ENCODE measurements at regions of chrX and their contacts with region 1.

Region 1: DNA sequence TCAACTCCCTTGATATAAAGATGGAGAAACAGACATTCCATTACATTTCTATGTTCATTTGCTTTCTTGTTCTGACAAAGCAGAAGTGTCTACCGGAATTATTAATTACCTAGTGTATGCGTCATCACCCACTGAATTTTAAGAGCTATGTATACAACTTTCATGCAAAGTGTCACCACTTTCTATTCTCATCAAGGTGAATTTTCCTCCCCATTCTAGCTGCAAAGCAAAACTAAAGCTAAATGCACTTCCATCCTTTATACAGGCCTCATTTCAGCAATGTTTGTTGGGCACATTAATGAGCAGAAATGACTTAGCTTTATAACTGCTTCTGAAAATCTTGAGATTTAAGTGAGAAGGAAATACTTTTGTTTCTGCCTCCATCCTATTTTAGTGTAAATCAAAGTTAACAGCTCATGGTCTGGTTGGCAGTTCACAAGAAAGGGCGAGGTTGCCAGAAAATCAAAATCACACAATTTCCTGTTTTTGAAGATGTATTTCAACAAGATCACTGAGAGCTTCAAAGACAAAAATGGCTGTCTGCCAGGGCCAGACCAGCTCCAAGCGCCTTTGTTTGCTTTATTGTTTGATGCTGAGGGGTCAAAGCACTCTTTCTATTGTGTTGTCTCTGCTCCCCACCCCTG is 7.2 kb upstream of the FAM9C start:
- DNase-seq: peak; percentile 71
- ATAC-seq: peak; percentile 71
- H3K4me3 ChIP-seq: no peak overlapping the region
- H3K27ac ChIP-seq: peak overlapping the region; percentile 69
- H3K4me1 ChIP-seq: peaks cover 48% of the 10 kb centered on the region
- H3K27me3 ChIP-seq: no peaks in the 10 kb centered on the region
- CTCF ChIP-seq: no peak
- EP300 ChIP-seq: peak; percentile 85 to 95; a peak in 3 of 4 replicates
- POLR2A ChIP-seq: no peak
- RAD21 ChIP-seq: no peak

Region 2: DNA sequence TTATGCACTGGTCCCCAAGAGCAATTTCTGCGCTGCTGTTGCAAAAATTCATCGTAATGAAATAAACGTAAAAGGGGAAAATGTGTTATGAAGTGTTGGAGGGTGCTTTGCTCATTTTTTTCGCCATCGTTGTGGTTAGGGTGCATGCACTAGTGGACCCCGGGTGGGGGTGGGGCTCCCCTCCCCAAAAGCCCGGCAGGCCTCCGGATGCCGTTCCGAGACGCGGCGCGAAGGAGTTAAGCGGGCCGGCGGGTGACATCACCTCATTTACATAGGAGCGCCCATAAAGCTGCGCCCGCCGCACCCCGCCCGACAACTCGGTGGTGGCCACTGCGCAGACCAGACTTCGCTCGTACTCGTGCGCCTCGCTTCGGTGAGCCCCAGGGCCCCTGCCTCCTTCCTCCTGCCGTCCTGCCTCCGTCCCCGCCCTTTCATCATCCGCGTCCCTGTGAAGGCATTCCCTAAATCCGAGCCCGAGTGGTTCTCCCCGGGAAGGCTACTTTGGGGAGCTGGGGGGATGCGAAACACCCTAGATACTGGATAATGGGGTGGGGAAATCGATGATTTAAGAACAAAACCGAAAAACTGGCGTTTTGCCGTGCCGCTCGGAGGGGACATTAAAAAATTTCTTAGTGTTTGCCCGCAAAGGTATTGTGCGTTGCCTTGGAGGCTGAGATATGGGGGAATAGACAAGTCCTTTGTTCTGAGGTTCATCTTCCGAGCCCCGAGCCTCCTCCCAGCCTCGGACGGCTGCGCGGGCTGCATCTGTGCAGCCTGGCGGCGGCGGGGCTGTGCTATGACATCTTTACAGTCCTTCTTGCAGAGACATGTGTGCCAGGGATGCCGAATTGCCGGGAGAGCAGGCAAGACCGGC is 76.6 kb before region 1 on chrX and contains the start of gene TMSB4X:
- CTCF ChIA-PET with region 1: no interaction called
- POLR2A ChIA-PET with region 1: interaction called, 4 read pairs
- RAD21 ChIA-PET with region 1: interaction called, 16 read pairs
- SMC1A ChIA-PET with region 1: interaction called, 66 read pairs
- in situ Hi-C with region 1: no loop called
- intact Hi-C with region 1: no loop called
- DNase-seq: no peak
- ATAC-seq: peak; percentile 35
- H3K4me3 ChIP-seq: peak within 1 kb of the TSS; percentile 81
- H3K27ac ChIP-seq: peak within 1 kb of the TSS; percentile 90
- H3K4me1 ChIP-seq: peaks cover 6% of the 10 kb centered on the region; the same call in 1 of the 2 replicates
- H3K27me3 ChIP-seq: no peaks in the 10 kb centered on the region
- CTCF ChIP-seq: no peak
- EP300 ChIP-seq: no peak
- POLR2A ChIP-seq: peak; percentile 97
- RAD21 ChIP-seq: no peak
- polyA plus RNA-seq, gene TMSB4X: 32,576 to 35,408 TPM

Region 3: GRCh38 chrX:13000301-13000811 is 51.3 kb before region 1 on chrX:
- CTCF ChIA-PET with region 1: interaction called, 5 read pairs
- POLR2A ChIA-PET with region 1: interaction called, 10 read pairs
- RAD21 ChIA-PET with region 1: interaction called, 84 read pairs
- SMC1A ChIA-PET with region 1: interaction called, 115 read pairs
- in situ Hi-C with region 1: no loop called
- intact Hi-C with region 1: loop called (anchors 2 kb)
- DNase-seq: peak; percentile 90
- ATAC-seq: peak; percentile 52
- H3K4me3 ChIP-seq: peak overlapping the region; percentile 9; the same call in 1 of the 2 replicates
- H3K27ac ChIP-seq: peak overlapping the region; percentile 91
- H3K4me1 ChIP-seq: peaks cover 69% of the 10 kb centered on the region
- H3K27me3 ChIP-seq: no peaks in the 10 kb centered on the region
- CTCF ChIP-seq: no peak
- EP300 ChIP-seq: peak; percentile 73; a peak in 2 of 4 replicates
- POLR2A ChIP-seq: no peak
- RAD21 ChIP-seq: peak; percentile 10; the same call in 1 of the 2 replicates

Region 4: DNA sequence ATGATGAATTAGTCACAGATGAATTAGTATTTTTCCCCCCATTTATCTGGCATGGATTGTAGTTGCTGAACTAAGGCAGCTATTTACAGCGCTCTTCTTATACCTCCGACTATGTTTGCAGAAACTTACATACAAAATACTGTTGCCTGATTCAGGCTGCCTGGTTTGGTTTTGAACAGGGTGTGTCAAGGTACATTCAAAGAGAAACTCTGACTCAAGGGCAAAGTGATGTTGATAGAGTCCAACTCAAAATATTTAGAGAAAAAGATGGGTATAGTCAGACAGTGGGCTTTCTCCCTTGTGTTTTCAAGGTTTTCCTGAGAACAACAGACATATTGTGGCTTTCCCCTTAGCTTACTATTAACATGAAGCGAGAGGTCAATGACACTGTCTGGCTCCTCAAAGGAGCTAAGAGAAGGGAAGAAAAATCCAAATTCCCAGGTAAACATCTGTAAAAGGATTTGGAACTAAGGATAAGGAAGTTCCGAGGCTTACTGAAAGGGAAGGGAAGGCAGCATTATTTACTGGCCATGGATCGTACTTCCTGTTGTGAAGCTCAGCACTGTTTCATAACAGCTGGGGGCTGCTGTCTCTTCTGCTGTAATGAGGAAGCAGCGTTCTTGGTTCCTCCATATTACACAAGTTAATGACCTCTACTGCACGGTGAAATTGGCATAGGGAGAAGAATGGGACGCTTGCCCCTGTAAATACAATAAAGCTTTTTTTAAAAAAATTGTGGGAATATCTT is 38.1 kb before region 1 on chrX:
- CTCF ChIA-PET with region 1: interaction called, 8 read pairs
- POLR2A ChIA-PET with region 1: interaction called, 8 read pairs
- RAD21 ChIA-PET with region 1: interaction called, 84 read pairs
- SMC1A ChIA-PET with region 1: interaction called, 115 read pairs
- in situ Hi-C with region 1: no loop called
- intact Hi-C with region 1: no loop called
- DNase-seq: no peak
- ATAC-seq: peak; percentile 87
- H3K4me3 ChIP-seq: peak overlapping the region; percentile 14
- H3K27ac ChIP-seq: peak overlapping the region; percentile 96
- H3K4me1 ChIP-seq: peaks cover 63% of the 10 kb centered on the region
- H3K27me3 ChIP-seq: no peaks in the 10 kb centered on the region
- CTCF ChIP-seq: no peak
- EP300 ChIP-seq: 0 out of 4 replicates have a peak, but pooled peaks of 1 of the 2 experiments have one; percentile 2
- POLR2A ChIP-seq: no peak
- RAD21 ChIP-seq: no peak

Region 5: GRCh38 chrX:13064599-13065143 is 13.0 kb after region 1 on chrX:
- CTCF ChIA-PET with region 1: no interaction called
- POLR2A ChIA-PET with region 1: interaction called, 6 read pairs
- RAD21 ChIA-PET with region 1: interaction called, 5 read pairs
- SMC1A ChIA-PET with region 1: interaction called, 124 read pairs
- in situ Hi-C with region 1: no loop called
- intact Hi-C with region 1: no loop called
- DNase-seq: no peak
- ATAC-seq: peak; percentile 45
- H3K4me3 ChIP-seq: no peak overlapping the region
- H3K27ac ChIP-seq: no peak overlapping the region
- H3K4me1 ChIP-seq: peaks cover 5% of the 10 kb centered on the region; the same call in 1 of the 2 replicates
- H3K27me3 ChIP-seq: no peaks in the 10 kb centered on the region
- CTCF ChIP-seq: no peak
- EP300 ChIP-seq: no peak
- POLR2A ChIP-seq: no peak
- RAD21 ChIP-seq: no peak

Measured in GM12878 (cell line).